Activated CD4-positive, alpha-beta memory T cell treated with anti-CD3 and anti-CD28 coated beads for 36 hours (primary cell): ENCODE measurements at regions of chr14 and their contacts with region 1.

Region 1: GRCh38 chr14:75293920-75294642 is 15.5 kb downstream of the FOS start:
- DNase-seq: peak; percentile 96
- H3K4me3 Mint-ChIP-seq: peak overlapping the region; percentile 79
- H3K27ac Mint-ChIP-seq: peak overlapping the region; percentile 67
- H3K4me1 Mint-ChIP-seq: peaks cover 20% of the 10 kb centered on the region
- H3K27me3 Mint-ChIP-seq: no peaks in the 10 kb centered on the region

Region 2: GRCh38 chr14:75132382-75133086 is 161.5 kb before region 1 on chr14:
- CTCF ChIA-PET with region 1: interaction called, 280 read pairs
- POLR2A ChIA-PET with region 1: interaction called, 5 read pairs
- intact Hi-C with region 1: loop called (anchors 1 kb)
- DNase-seq: peak; percentile 37
- H3K4me3 Mint-ChIP-seq: no peak overlapping the region
- H3K27ac Mint-ChIP-seq: peak overlapping the region; percentile 50
- H3K4me1 Mint-ChIP-seq: peaks cover 18% of the 10 kb centered on the region
- H3K27me3 Mint-ChIP-seq: no peaks in the 10 kb centered on the region

Region 3: DNA sequence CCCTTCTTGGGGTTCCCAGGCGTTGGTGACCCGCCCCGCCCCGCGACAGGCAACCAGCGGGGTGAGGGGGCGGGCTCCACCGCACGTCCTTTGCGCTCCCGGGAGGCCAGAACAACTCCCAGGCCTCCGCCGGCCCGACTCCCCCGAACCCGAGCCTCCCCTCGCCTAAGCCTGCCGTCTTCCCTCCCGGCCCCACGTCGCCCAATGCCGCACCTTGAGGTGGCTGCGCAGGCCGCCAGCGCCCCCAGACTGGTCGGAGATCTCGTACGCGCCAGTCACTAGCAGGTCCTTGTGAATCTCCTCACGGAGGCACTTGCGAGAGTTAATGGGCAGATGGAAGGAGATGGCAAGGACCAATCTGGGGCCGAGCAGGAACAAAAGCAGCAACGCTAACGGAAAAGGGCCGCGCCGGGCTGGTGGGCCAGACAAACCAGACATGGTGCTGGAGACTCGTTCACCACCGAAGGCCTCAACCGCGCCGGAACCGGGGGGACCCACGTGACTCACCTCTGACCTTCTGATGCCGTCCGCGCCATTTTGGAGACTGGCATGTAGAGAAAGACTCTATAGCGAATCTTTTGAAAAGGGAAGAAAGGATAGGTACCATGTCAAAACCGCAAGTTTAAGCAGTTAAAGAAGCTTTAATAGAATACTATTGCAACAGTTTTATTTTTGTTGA is 117.8 kb before region 1 on chr14 and contains the start of gene TMED10:
- CTCF ChIA-PET with region 1: interaction called, 4 read pairs
- POLR2A ChIA-PET with region 1: interaction called, 3 read pairs
- intact Hi-C with region 1: loop called (anchors 1 kb)
- DNase-seq: peak; percentile 94
- H3K4me3 Mint-ChIP-seq: peak within 1 kb of the TSS; percentile 86
- H3K27ac Mint-ChIP-seq: peak within 1 kb of the TSS; percentile 98
- H3K4me1 Mint-ChIP-seq: peaks cover 42% of the 10 kb centered on the region
- H3K27me3 Mint-ChIP-seq: no peaks in the 10 kb centered on the region
- total RNA-seq, gene TMED10: 189 to 201 TPM

Region 4: GRCh38 chr14:75258615-75259466 is 35.2 kb before region 1 on chr14:
- CTCF ChIA-PET with region 1: interaction called, 3 read pairs
- POLR2A ChIA-PET with region 1: interaction called, 6 read pairs
- intact Hi-C with region 1: loop called (anchors 1 kb)
- DNase-seq: peak; percentile 99
- H3K4me3 Mint-ChIP-seq: peak overlapping the region; percentile 86
- H3K27ac Mint-ChIP-seq: peak overlapping the region; percentile 84
- H3K4me1 Mint-ChIP-seq: peaks cover 25% of the 10 kb centered on the region
- H3K27me3 Mint-ChIP-seq: peaks cover 6% of the 10 kb centered on the region